Endothelial cell of umbilical vein (primary cell): ENCODE measurements at regions of chr12 and their contacts with region 1.

Region 1: DNA sequence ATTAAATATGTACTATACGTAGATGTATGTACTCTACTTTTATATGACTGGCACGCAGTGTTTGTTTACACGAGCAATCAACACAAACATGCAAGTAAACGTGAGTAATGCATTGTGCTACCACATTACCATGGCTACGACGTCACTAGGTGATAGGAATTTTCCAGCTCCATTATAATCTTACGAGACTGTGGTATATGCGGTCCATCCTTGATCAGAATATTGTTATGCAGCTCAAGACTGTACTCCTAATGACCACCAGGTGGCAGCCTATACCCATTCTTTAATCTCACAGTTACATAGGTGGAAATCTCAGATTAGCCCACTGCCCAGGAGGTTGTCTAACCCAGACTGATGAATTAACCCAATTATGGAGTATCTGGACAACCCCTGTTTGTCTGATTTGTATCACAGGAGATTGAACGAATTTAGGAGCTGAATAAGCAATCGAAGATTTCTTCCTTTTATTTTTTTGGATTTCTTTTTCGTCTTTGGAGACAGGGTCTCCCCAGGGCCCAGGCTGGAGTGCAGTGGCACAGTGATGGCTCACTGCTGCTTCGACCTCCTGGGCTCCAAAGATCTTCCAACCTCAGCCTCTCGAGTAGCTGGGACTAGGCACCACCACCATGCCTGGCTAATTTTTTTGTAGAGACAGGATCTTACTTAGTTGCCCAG is 8.7 kb upstream of the TESPA1 start:
- DNase-seq: peak; percentile 72
- H3K4me3 ChIP-seq: no peak overlapping the region
- H3K27ac ChIP-seq: no peak overlapping the region
- H3K4me1 ChIP-seq: no peaks in the 10 kb centered on the region
- H3K27me3 ChIP-seq: peaks cover 3 to 4% of the 10 kb centered on the region in 2 experiments
- CTCF ChIP-seq: peak; percentile 59 to 64
- POLR2A ChIP-seq: no peak

Region 2: GRCh38 chr12:53825246-53826081 is 1167.8 kb before region 1 on chr12:
- CTCF ChIA-PET with region 1: no interaction called
- POLR2A ChIA-PET with region 1: no interaction called
- dilution Hi-C with region 1: no loop called
- intact Hi-C with region 1: no loop called
- DNase-seq: no peak
- H3K4me3 ChIP-seq: no peak overlapping the region
- H3K27ac ChIP-seq: no peak overlapping the region
- H3K4me1 ChIP-seq: no peaks in the 10 kb centered on the region
- H3K27me3 ChIP-seq: peaks cover 10 to 14% of the 10 kb centered on the region in 2 experiments
- CTCF ChIP-seq: no peak
- POLR2A ChIP-seq: no peak

Region 3: DNA sequence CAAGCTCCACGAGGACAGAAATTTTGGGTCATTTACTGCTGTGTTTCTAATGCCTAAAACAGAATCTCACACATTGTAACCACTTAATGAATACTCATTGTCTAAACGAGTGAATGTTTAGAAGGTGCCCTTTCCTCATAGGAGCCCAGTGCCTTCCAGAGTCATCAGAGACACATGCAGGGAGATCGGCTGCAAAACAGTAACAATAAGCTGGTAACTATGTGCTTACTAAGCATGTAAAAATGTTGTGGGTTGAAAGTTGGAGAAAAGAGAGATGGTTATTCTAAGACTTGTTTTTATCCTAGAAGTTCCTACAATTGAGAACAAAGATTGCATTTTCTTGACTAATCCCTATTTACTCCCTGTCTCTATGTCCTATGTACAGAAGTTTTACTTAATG is 16.1 kb before region 1 on chr12:
- CTCF ChIA-PET with region 1: interaction called, 19 read pairs
- POLR2A ChIA-PET with region 1: no interaction called
- dilution Hi-C with region 1: no loop called
- intact Hi-C with region 1: no loop called
- DNase-seq: no peak
- H3K4me3 ChIP-seq: no peak overlapping the region
- H3K27ac ChIP-seq: no peak overlapping the region
- H3K4me1 ChIP-seq: no peaks in the 10 kb centered on the region
- H3K27me3 ChIP-seq: peaks cover 1 to 15% of the 10 kb centered on the region in 2 experiments
- CTCF ChIP-seq: no peak
- POLR2A ChIP-seq: no peak

Region 4: GRCh38 chr12:55019779-55020178 is 26.5 kb after region 1 on chr12 and contains the start of gene NEUROD4:
- CTCF ChIA-PET with region 1: interaction called, 12 read pairs
- POLR2A ChIA-PET with region 1: no interaction called
- dilution Hi-C with region 1: no loop called
- intact Hi-C with region 1: no loop called
- DNase-seq: peak; percentile 54
- H3K4me3 ChIP-seq: no peak within 1 kb of the TSS
- H3K27ac ChIP-seq: no peak within 1 kb of the TSS
- H3K4me1 ChIP-seq: no peaks in the 10 kb centered on the region
- H3K27me3 ChIP-seq: no peaks in the 10 kb centered on the region
- CTCF ChIP-seq: no peak
- POLR2A ChIP-seq: no peak
- total RNA-seq, gene NEUROD4: not detected in 2 replicates

Region 5: DNA sequence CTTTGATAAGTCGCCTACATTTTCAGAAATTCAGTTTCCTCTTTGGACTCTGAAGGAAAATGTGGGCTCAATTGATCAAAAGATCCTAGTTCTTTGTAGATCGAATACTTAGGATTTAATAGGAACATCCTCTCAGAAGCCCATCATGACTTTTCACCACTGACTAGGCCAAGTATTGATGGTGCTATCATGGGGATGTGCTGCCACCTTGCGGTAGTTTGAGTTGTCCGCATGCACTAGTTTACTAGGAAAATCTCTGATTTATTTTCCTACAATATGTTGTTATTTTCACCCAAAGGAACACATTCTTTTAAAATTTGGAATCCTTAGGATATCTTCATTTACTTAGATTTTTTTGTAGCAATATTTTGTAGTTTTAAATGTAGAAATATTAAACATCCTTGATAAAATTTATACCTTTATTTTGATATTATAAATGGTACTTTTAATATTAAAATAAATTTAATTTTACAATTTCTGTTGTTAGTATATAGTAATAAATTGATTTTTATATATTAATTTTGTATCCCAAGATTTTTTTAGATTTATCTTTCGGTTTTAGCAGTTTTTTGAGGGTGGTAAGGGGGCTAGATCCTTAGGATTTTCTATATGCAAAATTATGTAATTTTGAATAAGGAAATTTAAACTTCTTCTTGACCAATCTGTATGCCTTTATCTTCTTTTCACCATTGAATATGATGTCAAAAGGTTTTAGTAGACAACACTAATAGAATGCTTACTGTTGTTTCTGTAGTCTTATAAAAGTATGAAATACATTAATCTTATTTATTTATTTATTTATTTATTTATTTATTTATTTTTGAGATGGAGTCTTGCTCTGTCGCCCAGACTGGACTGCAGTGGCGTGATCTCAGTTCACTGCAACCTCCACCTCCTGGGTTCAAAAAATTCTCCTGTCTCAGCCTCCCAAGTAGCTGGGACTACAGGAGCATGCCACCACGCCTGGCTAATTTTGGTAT is 80.0 kb after region 1 on chr12:
- CTCF ChIA-PET with region 1: interaction called, 249 read pairs
- POLR2A ChIA-PET with region 1: no interaction called
- dilution Hi-C with region 1: no loop called
- intact Hi-C with region 1: loop called (anchors 1 kb)
- DNase-seq: peak; percentile 67
- H3K4me3 ChIP-seq: no peak overlapping the region
- H3K27ac ChIP-seq: no peak overlapping the region
- H3K4me1 ChIP-seq: no peaks in the 10 kb centered on the region
- H3K27me3 ChIP-seq: peaks cover 0 to 4% of the 10 kb centered on the region in 2 experiments
- CTCF ChIP-seq: peak; percentile 66 to 75
- POLR2A ChIP-seq: no peak

Region 6: GRCh38 chr12:55619354-55620138 is 626.2 kb after region 1 on chr12:
- CTCF ChIA-PET with region 1: interaction called, 3 read pairs
- POLR2A ChIA-PET with region 1: no interaction called
- dilution Hi-C with region 1: no loop called
- intact Hi-C with region 1: loop called (anchors 5 kb)
- DNase-seq: peak; percentile 95
- H3K4me3 ChIP-seq: no peak overlapping the region
- H3K27ac ChIP-seq: no peak overlapping the region
- H3K4me1 ChIP-seq: no peaks in the 10 kb centered on the region
- H3K27me3 ChIP-seq: peaks cover 4 to 6% of the 10 kb centered on the region in 2 experiments
- CTCF ChIP-seq: peak; percentile 49 to 77
- POLR2A ChIP-seq: no peak